A673 (cell line): ENCODE measurements at regions of chr2 and their contacts with region 1.

Region 1: GRCh38 chr2:113602869-113603466 is 24.1 kb upstream of the RABL2A start:
- DNase-seq: no peak
- H3K4me3 ChIP-seq: peak overlapping the region; percentile 54
- H3K27ac ChIP-seq: peak overlapping the region; percentile 50
- H3K4me1 ChIP-seq: no peaks in the 10 kb centered on the region
- H3K27me3 ChIP-seq: no peaks in the 10 kb centered on the region
- CTCF ChIP-seq: no peak

Region 2: DNA sequence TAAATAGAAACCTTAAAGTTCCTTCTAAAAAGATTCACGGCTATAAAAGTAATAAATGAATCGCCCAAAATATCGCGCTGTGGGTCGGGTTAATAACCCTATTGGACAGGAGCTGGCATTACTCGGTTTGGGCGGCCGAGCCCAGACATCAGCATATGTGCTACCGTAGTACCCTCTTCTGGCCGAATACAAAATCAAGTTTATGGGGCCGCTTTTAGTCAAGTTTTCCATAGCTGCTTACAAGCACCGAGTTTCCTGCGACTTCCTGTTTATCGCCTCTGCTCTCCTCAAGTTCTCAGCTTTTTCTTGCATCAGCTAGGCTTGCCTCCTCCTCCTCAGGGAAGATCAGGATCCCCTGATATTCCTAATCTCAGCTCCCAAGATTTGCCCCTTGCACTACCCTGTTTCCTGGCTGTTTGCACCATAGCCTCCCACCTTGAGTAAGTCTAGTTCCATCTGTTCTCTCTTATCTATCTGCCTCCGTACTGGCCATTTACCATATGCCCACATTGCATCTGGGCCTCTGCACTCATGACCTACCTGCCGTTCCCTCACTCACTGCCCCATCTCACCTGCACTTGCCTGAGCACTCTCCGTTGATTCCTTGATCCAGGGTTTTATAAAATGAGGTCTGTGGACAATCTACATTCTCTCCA is 97.3 kb after region 1 on chr2:
- CTCF ChIA-PET with region 1: no interaction called
- POLR2A ChIA-PET with region 1: no interaction called
- intact Hi-C with region 1: loop called (anchors 5 kb)
- DNase-seq: peak; percentile 69
- H3K4me3 ChIP-seq: peak overlapping the region; percentile 7
- H3K27ac ChIP-seq: no peak overlapping the region
- H3K4me1 ChIP-seq: no peaks in the 10 kb centered on the region
- H3K27me3 ChIP-seq: no peaks in the 10 kb centered on the region
- CTCF ChIP-seq: peak; percentile 51